ENCODE measurements at regions of chrX and their contacts with region 1.

Region 1: GRCh38 chrX:12701628-12702027 is 89.6 kb upstream of the PRPS2 start:
- DNase-seq: peak; percentile 84
- H3K4me3 Mint-ChIP-seq: no peak overlapping the region
- H3K27ac Mint-ChIP-seq: no peak overlapping the region
- H3K4me1 Mint-ChIP-seq: no peaks in the 10 kb centered on the region
- H3K27me3 Mint-ChIP-seq: peaks cover 49% of the 10 kb centered on the region
- CTCF ChIP-seq: peak; percentile 72

Region 2: DNA sequence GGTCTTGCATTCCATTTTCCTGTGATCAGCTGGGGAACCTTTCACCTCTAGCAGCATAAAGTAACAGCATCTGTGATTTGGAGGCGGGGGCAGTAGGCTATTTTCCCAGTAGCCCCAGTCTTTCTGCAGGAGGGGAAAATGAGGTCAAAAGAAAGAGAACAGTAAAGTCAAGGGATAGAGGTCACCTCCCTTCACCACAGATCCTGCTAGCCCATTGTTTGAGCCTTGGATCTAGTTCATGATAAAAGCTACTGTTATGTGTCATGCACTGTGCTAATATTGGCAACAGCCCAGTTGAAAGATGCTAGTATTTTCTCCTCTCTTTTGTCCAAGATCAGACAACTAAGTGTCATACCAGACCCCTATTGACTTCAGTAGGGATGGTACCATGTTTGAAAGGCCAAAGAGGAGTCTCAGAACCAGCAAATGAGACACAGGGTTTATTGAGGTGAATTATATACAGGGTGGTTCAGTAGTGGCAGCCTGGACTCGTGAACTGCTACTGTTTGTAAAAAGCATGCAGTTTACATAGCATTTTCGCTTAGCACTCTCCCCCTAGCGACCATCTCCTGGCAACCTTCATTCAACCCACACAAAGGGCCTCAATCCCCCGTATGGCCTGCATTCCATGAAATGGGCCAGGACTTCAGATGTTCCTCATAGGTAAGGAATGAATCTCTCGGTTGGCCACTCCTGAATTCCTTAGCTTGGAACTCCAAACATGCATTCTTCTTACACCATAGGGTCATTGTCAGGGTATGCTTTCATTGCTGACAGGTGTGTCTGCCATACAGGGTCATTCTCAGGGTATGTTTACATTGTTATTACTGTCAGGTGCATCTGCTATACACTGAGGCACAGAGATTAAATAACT is 733.4 kb before region 1 on chrX:
- CTCF ChIA-PET with region 1: no interaction called
- POLR2A ChIA-PET with region 1: no interaction called
- intact Hi-C with region 1: loop called (anchors 10 kb)
- DNase-seq: peak; percentile 24
- H3K4me3 Mint-ChIP-seq: no peak overlapping the region
- H3K27ac Mint-ChIP-seq: no peak overlapping the region
- H3K4me1 Mint-ChIP-seq: no peaks in the 10 kb centered on the region
- H3K27me3 Mint-ChIP-seq: no peaks in the 10 kb centered on the region
- CTCF ChIP-seq: no peak

Region 3: DNA sequence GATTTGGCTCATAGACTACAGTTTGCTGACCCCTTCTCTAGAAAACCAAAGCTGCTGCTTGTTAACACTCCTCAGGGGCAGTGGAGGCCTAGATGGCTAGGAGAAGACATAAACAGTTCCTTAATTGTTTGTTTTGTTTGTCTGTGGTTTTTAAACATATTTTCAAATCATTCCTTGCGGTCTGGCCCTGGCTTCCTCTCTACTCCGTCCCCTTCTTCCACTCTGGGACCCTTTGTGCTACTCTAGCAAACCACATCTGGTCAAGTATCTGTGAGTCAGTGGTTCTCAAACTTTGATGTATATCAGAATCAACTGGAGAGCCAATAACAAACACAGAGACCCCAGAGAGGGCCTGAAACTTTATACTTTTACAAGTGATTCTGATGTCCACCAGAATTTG is 527.3 kb before region 1 on chrX:
- CTCF ChIA-PET with region 1: no interaction called
- POLR2A ChIA-PET with region 1: no interaction called
- intact Hi-C with region 1: no loop called
- DNase-seq: no peak
- H3K4me3 Mint-ChIP-seq: no peak overlapping the region
- H3K27ac Mint-ChIP-seq: no peak overlapping the region
- H3K4me1 Mint-ChIP-seq: peaks cover 6% of the 10 kb centered on the region
- H3K27me3 Mint-ChIP-seq: no peaks in the 10 kb centered on the region
- CTCF ChIP-seq: no peak

Region 4: GRCh38 chrX:12447448-12448064 is 254.1 kb before region 1 on chrX:
- CTCF ChIA-PET with region 1: interaction called, 4 read pairs
- POLR2A ChIA-PET with region 1: no interaction called
- intact Hi-C with region 1: loop called (anchors 1 kb)
- DNase-seq: peak; percentile 80
- H3K4me3 Mint-ChIP-seq: no peak overlapping the region
- H3K27ac Mint-ChIP-seq: peak overlapping the region; percentile 92
- H3K4me1 Mint-ChIP-seq: peaks cover 18% of the 10 kb centered on the region
- H3K27me3 Mint-ChIP-seq: no peaks in the 10 kb centered on the region
- CTCF ChIP-seq: peak; percentile 22

Region 5: DNA sequence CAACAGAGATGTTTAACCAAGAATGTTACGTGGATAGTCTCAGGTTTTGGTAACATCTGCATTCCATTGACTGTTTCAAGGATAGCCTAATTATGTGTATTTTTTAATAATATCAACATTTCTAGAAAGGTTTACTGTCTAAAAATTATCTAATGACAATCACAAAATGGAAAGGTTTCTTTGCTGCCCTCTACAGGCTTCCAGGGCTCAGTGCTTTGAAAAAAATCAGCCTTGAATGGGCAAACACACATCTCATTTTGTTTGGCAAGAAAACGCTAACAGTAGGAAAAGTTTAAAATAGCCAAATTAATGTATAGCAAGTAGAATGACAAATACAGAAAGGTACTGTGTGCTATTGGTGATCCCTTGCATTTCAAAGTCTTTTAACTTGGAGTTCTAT is 133.8 kb before region 1 on chrX:
- CTCF ChIA-PET with region 1: no interaction called
- POLR2A ChIA-PET with region 1: no interaction called
- intact Hi-C with region 1: loop called (anchors 1 kb)
- DNase-seq: peak; percentile 39
- H3K4me3 Mint-ChIP-seq: no peak overlapping the region
- H3K27ac Mint-ChIP-seq: no peak overlapping the region
- H3K4me1 Mint-ChIP-seq: no peaks in the 10 kb centered on the region
- H3K27me3 Mint-ChIP-seq: no peaks in the 10 kb centered on the region
- CTCF ChIP-seq: peak; percentile 51

Region 6: DNA sequence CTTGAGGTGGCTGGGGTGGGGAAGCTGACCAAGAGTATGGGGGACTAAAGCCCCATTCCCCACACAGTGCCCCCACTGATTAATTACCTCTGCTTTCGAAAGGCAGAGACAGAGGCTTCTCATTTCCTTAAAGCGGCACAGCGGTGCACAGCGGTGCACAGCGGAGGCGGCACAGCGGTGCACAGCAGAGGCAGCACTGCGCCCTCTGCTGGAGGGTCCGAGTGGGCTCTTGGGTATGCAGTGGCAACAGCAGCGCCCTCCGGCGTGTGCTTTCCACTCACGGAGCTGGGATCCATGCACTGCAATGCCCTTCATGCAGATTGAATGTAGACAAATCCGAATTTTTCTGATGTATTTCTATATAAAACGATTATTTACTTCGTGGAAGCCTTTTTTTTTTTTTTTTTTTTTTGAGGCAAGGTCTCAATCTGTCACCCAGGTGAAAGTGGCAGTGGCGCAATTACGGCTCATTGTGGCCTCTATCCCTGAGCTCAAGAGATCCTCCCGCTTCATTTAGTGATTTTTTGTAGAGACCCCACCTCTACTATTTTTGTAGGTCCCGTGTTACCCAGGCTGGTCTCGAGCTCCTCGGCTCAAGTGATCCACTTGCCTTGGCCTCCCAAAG is 69.9 kb after region 1 on chrX:
- CTCF ChIA-PET with region 1: interaction called, 11 read pairs
- POLR2A ChIA-PET with region 1: no interaction called
- intact Hi-C with region 1: loop called (anchors 5 kb)
- DNase-seq: no peak
- H3K4me3 Mint-ChIP-seq: no peak overlapping the region
- H3K27ac Mint-ChIP-seq: no peak overlapping the region
- H3K4me1 Mint-ChIP-seq: no peaks in the 10 kb centered on the region
- H3K27me3 Mint-ChIP-seq: peaks cover 66% of the 10 kb centered on the region
- CTCF ChIP-seq: peak; percentile 26

Measured in MCF 10A (cell line).